Activated CD4-positive, alpha-beta T cell treated with anti-CD3 and anti-CD28 coated beads, Interleukin-2, amount 10 ng/mL, durations not matched to agents 24 days and 14 days (primary cell): ENCODE measurements at regions of chr3 and their contacts with region 1.

Region 1: GRCh38 chr3:150603153-150603979 is at the start of gene SELENOT:
- DNase-seq: peak; percentile 99
- H3K4me3 Mint-ChIP-seq: peak within 1 kb of the TSS; percentile 98
- H3K27ac Mint-ChIP-seq: peak within 1 kb of the TSS; percentile 99
- H3K4me1 Mint-ChIP-seq: peaks cover 50% of the 10 kb centered on the region
- H3K27me3 Mint-ChIP-seq: no peaks in the 10 kb centered on the region
- total RNA-seq, gene SELENOT: 127 and 135 TPM in 2 replicates

Region 2: DNA sequence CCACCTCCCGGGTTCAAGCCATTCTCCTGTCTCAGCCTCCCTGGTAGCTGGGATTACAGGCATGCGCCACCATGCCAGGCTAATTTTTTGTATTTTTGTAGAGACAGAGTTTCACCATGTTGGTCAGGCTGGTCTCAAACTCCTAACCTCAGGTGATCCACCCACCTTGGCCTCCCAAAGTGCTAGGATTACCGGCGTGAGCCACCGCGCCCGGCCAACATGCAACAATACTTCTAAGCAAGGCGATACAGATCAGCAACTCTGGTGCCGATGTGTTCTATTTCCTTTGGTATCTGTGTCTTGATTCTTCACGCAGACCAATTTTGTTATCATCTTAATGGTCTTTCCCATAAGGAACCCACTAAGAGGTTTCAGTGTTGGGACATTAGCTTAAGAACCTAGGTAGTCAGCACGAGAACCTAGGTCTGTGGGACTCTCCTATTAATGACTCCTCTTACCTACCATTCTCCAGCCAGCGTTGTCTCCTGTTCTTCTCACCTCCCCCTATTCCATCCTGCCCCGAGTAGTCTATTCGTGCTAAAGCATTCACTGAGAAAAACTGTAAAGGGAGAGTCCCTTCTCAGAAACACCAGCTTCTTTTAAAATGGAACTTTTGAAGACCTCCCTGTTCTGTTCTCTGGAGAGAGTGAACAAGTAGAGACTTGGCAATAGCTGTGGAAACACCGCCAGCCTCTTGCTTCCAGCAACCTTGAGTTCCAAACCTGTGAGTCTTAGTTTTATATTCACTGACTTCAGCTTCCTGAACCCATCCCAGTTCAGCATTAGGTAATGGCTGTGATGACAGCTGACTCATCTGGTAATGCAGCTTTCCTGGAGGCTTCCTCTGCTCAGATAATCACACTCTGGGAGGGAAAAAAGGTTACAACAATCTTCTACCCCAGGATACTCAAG is 134.1 kb before region 1 on chr3:
- intact Hi-C with region 1: no loop called
- DNase-seq: no peak
- H3K4me3 Mint-ChIP-seq: no peak overlapping the region
- H3K27ac Mint-ChIP-seq: no peak overlapping the region
- H3K4me1 Mint-ChIP-seq: no peaks in the 10 kb centered on the region
- H3K27me3 Mint-ChIP-seq: no peaks in the 10 kb centered on the region

Region 3: GRCh38 chr3:150546226-150547044 is 56.9 kb before region 1 on chr3 and contains the starts of genes EIF2A and SERP1:
- intact Hi-C with region 1: loop called (anchors 1 kb)
- DNase-seq: peak; percentile 100
- H3K4me3 Mint-ChIP-seq: peak within 1 kb of the TSS; percentile 90
- H3K27ac Mint-ChIP-seq: peak within 1 kb of the TSS; percentile 95
- H3K4me1 Mint-ChIP-seq: peaks cover 51% of the 10 kb centered on the region
- H3K27me3 Mint-ChIP-seq: no peaks in the 10 kb centered on the region
- total RNA-seq, gene EIF2A: 125 and 133 TPM in 2 replicates
- total RNA-seq, gene SERP1: 88.8 and 103 TPM in 2 replicates

Region 4: DNA sequence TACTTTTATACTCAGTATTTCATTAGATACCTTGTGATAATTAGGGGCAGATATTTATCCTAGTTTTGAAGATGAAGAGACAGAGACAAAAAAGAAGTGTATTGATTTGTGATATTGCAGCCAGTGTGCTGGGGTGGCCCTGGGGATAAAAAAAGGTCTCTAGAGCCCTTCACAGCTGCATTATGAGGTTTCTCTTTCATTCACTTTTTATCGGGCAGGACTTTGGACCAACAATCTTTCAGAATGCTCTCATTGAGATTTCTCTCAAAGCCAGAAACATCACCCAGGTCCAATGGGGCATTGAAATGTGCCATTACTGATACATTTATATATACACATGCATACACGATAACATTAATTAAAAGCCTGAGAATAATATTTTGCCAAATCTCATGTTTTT is 20.7 kb before region 1 on chr3:
- intact Hi-C with region 1: loop called (anchors 2 kb)
- DNase-seq: no peak
- H3K4me3 Mint-ChIP-seq: no peak overlapping the region
- H3K27ac Mint-ChIP-seq: peak overlapping the region; percentile 78
- H3K4me1 Mint-ChIP-seq: peaks cover 18% of the 10 kb centered on the region
- H3K27me3 Mint-ChIP-seq: no peaks in the 10 kb centered on the region

Region 5: GRCh38 chr3:150703299-150704134 is 100.2 kb after region 1 on chr3 and contains the start of gene ERICH6:
- intact Hi-C with region 1: loop called (anchors 2 kb)
- DNase-seq: peak; percentile 95
- H3K4me3 Mint-ChIP-seq: peak within 1 kb of the TSS; percentile 92
- H3K27ac Mint-ChIP-seq: peak within 1 kb of the TSS; percentile 99
- H3K4me1 Mint-ChIP-seq: peaks cover 28% of the 10 kb centered on the region
- H3K27me3 Mint-ChIP-seq: peaks cover 10% of the 10 kb centered on the region
- total RNA-seq, gene ERICH6: not detected in 2 replicates